ENCODE measurements at regions of chrX and their contacts with region 1.

Region 1: DNA sequence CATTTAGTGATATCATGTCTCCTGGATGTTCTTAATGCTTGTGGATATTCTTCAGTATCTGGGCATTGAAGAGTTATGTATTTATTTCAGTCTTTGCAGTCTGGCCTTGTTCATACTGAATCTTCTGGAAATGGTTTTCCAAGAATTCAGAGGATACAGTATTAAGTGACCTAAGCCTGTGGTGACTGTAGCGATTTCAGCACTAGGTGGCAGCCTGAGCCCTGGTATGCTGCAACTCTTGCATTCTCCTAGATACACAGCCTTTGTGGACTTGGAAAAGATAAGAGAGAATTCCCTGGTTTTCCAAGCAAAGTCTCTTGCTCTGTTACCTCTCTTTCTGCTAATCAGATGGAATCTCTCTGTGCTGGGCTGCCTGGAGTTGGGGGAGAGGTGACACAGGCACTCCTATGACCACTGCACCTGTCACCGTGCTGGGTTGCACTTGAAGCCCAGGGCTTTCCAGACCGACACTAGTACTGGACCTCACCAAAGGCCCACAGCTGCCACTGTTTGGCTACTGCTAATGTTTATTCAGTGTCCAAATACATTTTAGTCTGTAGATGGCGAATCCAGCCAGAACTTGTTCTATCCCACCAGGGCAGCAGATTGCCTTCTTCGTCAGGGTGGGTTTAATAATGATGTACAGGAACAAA is 19.3 kb upstream of the SPIN2A start:
- DNase-seq: peak; percentile 50
- ATAC-seq: peak; percentile 100
- H3K4me3 ChIP-seq: no peak overlapping the region
- H3K27ac ChIP-seq: no peak overlapping the region
- H3K4me1 ChIP-seq: peaks cover 13% of the 10 kb centered on the region; the same call in 1 of the 2 replicates
- H3K27me3 ChIP-seq: no peaks in the 10 kb centered on the region
- CTCF ChIP-seq: peak; percentile 77
- EP300 ChIP-seq: no peak
- POLR2A ChIP-seq: no peak
- RAD21 ChIP-seq: no peak; the same call in 1 of the 2 replicates

Region 2: GRCh38 chrX:56764153-56764974 is 392.2 kb before region 1 on chrX:
- CTCF ChIA-PET with region 1: no interaction called
- POLR2A ChIA-PET with region 1: no interaction called
- in situ Hi-C with region 1: no loop called
- intact Hi-C with region 1: loop called (anchors 10 kb)
- DNase-seq: peak; percentile 48
- ATAC-seq: peak; percentile 94
- H3K4me3 ChIP-seq: peak overlapping the region; percentile 37 to 54 (median 39); a peak in 5 of 6 replicates
- H3K27ac ChIP-seq: peak overlapping the region; percentile 30
- H3K4me1 ChIP-seq: peaks cover 9% of the 10 kb centered on the region
- H3K27me3 ChIP-seq: no peaks in the 10 kb centered on the region
- CTCF ChIP-seq: peak; percentile 68
- EP300 ChIP-seq: no peak
- POLR2A ChIP-seq: no peak
- RAD21 ChIP-seq: no peak

Region 3: DNA sequence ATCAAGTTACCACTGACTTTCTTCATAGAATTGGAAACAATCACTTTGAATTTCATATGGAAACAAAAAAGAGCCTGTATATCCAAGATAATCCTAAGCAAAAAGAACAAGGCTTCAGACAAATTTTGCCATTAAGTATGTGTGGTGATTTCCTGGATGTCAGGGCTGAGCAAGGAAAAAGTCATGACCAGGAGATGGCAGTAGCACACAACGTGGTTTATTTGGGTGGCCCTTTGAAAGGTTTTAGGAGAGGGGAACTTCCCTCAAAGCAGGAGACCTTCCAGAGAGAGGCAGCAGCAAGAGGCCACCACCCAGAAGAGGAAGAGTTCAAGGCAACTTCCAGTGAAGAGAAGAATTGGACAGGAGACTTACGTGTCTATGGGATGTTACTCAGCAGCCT is 417.2 kb after region 1 on chrX:
- CTCF ChIA-PET with region 1: no interaction called
- POLR2A ChIA-PET with region 1: no interaction called
- in situ Hi-C with region 1: no loop called
- intact Hi-C with region 1: loop called (anchors 10 kb)
- DNase-seq: no peak
- ATAC-seq: no peak; the same call in 2 of the 3 replicates
- H3K4me3 ChIP-seq: no peak overlapping the region
- H3K27ac ChIP-seq: no peak overlapping the region
- H3K4me1 ChIP-seq: no peaks in the 10 kb centered on the region
- H3K27me3 ChIP-seq: no peaks in the 10 kb centered on the region
- CTCF ChIP-seq: peak; percentile 64
- EP300 ChIP-seq: no peak
- POLR2A ChIP-seq: no peak
- RAD21 ChIP-seq: no peak